Panc1 (cell line): ENCODE measurements at regions of chr7 and their contacts with region 1.

Region 1: GRCh38 chr7:5255832-5256231 is 26.9 kb upstream of the SLC29A4 start:
- DNase-seq: no peak
- ATAC-seq: no peak
- H3K4me3 ChIP-seq: no peak overlapping the region
- H3K27ac ChIP-seq: no peak overlapping the region
- H3K4me1 ChIP-seq: no peaks in the 10 kb centered on the region
- H3K27me3 ChIP-seq: no peaks in the 10 kb centered on the region
- CTCF ChIP-seq: no peak

Region 2: GRCh38 chr7:5172196-5172775 is 83.5 kb before region 1 on chr7:
- CTCF ChIA-PET with region 1: no interaction called
- POLR2A ChIA-PET with region 1: interaction called, 10 read pairs
- in situ Hi-C with region 1: no loop called
- intact Hi-C with region 1: no loop called
- DNase-seq: no peak
- ATAC-seq: no peak
- H3K4me3 ChIP-seq: no peak overlapping the region
- H3K27ac ChIP-seq: no peak overlapping the region
- H3K4me1 ChIP-seq: no peaks in the 10 kb centered on the region
- H3K27me3 ChIP-seq: no peaks in the 10 kb centered on the region
- CTCF ChIP-seq: no peak

Region 3: GRCh38 chr7:5203183-5203537 is 52.7 kb before region 1 on chr7:
- CTCF ChIA-PET with region 1: interaction called, 10 read pairs
- POLR2A ChIA-PET with region 1: no interaction called
- in situ Hi-C with region 1: no loop called
- intact Hi-C with region 1: no loop called
- DNase-seq: no peak
- ATAC-seq: no peak
- H3K4me3 ChIP-seq: no peak overlapping the region
- H3K27ac ChIP-seq: no peak overlapping the region
- H3K4me1 ChIP-seq: no peaks in the 10 kb centered on the region
- H3K27me3 ChIP-seq: no peaks in the 10 kb centered on the region
- CTCF ChIP-seq: no peak